Ovary (tissue), 10 donors: ENCODE measurements at regions of chr2 and their contacts with region 1.

Region 1: GRCh38 chr2:189115126-189115525 is 64.4 kb downstream of the COL5A2 start:
- DNase-seq: no peak
- H3K4me3 ChIP-seq: no peak overlapping the region
- H3K27ac ChIP-seq: no peak overlapping the region
- H3K4me1 ChIP-seq: peaks cover 3% of the 10 kb centered on the region
- H3K27me3 ChIP-seq: no peaks in the 10 kb centered on the region
- CTCF ChIP-seq: peak in 1 of 3 donors; percentile 39
- EP300 ChIP-seq: no peak
- POLR2A ChIP-seq: no peak

Region 2: GRCh38 chr2:189164746-189165145 is 49.6 kb after region 1 on chr2:
- intact Hi-C with region 1: loop called in 1 of 4 experiments (anchors 10 kb)
- DNase-seq: peak in 3 of 5 donors; percentile 10 to 56 (median 38)
- H3K4me3 ChIP-seq: no peak overlapping the region
- H3K27ac ChIP-seq: peak overlapping the region in 1 of 2 donors; percentile 59
- H3K4me1 ChIP-seq: peaks cover 10% of the 10 kb centered on the region
- H3K27me3 ChIP-seq: no peaks in the 10 kb centered on the region
- CTCF ChIP-seq: no peak
- EP300 ChIP-seq: no peak
- POLR2A ChIP-seq: no peak

Region 3: GRCh38 chr2:189287982-189288521 is 172.9 kb after region 1 on chr2:
- intact Hi-C with region 1: loop called in 1 of 4 experiments (anchors 10 kb)
- DNase-seq: no peak
- H3K4me3 ChIP-seq: no peak overlapping the region
- H3K27ac ChIP-seq: no peak overlapping the region
- H3K4me1 ChIP-seq: no peaks in the 10 kb centered on the region
- H3K27me3 ChIP-seq: no peaks in the 10 kb centered on the region
- CTCF ChIP-seq: peak; percentile 21 to 58 (median 49)
- EP300 ChIP-seq: no peak
- POLR2A ChIP-seq: no peak